ENCODE measurements at regions of chr2 and their contacts with region 1.

Region 1: DNA sequence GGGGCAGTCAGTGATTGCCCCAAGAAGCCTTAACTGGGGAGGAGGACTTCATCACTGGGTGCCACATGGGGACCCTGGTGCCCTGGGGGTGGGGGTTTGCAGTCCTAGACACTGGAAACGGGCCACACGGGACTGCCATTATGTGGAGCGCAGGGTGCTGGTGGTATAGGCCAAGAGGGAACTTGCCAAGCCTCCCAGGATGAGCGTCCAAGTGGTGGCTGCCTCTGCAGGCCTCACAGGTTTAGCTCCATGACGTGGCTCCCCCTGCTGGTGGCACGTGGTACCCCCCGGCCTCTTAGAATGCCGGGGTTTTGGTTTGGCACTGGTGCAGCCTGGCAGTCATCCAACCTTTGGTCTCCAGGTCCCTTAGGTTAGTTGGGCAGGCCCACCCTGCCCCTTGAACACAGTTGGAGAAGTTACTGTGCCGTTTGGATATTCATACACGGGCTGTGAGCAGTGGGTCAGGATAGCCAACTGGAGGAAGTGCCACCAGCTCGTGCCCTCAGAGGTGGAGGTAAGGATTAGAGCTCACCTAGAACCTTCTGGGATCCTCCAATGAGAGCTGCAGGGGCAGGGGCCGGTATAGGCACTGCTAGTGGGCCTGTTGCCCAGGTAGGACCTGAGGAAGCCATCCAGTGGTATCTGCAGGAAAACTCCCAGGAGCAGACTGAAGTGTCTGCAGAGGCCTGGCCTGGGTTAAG is 5.6 kb downstream of the PTMA start:
- DNase-seq: peak; percentile 83
- H3K4me3 ChIP-seq: no peak overlapping the region
- H3K27ac ChIP-seq: peak overlapping the region; percentile 10
- H3K4me1 ChIP-seq: peaks cover 27% of the 10 kb centered on the region
- H3K27me3 ChIP-seq: no peaks in the 10 kb centered on the region
- CTCF ChIP-seq: peak; percentile 91 to 94
- POLR2A ChIP-seq: no peak

Region 2: DNA sequence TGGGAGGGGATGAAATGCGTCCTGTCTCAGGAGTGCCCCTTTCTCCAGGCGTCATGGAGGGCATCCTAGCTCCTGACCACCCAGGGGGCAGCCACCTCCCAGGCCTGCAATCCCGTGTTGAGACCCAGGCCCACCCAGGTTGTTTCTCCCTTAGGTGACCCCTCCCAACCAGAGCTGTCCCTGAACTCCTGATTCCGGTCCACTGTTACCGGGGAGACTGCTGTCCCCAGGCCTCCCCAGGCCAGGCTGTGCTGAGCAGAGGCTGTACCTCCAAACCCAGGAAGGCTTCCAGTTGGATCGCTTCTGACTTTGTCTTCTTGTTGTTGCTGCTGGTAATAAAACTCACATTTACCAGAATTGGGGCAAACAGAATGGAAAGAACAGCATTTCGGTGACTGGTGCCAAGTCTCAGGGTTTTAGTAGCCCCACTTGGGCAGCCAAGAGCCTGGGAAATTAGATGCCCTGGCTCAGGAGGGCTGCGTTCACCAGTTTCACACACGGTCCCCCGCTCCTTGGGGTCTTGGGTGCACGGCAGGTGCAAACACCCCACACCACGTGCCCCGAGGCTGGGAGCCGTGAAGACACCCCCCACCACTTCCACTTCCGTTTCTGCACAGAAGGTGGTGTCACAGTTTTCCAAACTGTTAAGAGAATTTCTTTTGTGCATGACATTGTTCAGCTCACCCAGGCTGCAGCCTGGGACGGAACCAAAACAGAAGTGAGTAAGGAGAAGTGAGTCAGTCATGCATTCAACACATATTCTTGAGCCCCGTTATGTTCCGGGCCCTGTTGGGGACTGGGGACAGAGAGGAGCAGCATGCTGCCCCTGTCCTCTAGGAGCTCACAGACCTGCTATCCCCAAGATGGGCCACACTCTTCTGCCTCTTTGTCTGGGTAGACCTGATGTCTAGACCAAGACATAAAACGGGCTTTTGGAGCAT is 819.8 kb before region 1 on chr2:
- CTCF ChIA-PET with region 1: no interaction called
- POLR2A ChIA-PET with region 1: no interaction called
- dilution Hi-C with region 1: no loop called
- intact Hi-C with region 1: no loop called
- DNase-seq: no peak
- H3K4me3 ChIP-seq: no peak overlapping the region
- H3K27ac ChIP-seq: no peak overlapping the region
- H3K4me1 ChIP-seq: no peaks in the 10 kb centered on the region
- H3K27me3 ChIP-seq: peaks cover 0 to 3% of the 10 kb centered on the region in 2 experiments
- CTCF ChIP-seq: no peak
- POLR2A ChIP-seq: no peak

Region 3: DNA sequence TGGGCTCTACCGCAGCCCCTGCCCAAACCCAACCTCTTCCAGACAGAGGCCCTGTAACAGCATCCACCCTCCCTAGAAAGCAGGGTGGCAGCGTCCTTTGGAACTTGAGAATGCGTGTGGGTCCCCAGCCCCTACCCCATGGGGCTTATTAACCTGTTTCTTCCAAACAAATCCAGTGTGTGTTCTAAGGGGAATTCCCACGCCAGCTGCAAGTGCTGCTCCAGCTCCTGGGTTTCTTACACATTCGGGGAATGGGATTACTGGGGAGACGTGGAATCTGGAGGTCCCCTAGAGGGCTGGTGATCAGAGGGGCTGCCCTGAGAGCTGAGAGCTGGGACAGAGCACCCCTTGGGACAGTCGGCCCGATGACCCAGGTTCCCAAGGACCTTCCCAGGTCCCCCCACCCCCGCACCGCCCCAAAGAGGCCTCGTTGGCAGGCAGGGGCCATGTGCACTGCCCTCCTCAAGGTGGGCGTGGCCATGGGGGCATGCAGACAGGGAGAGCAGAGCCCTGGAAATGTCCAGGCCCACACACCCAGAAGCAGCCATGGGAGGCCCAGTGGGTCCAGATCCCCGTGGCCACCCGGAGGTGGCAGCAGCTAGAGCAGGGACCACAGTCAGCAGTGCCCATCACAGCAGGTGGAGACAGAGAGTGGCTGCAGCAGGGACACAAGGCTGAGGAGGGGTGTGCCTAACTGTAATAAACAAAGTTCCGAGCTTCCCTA is 140.0 kb before region 1 on chr2:
- CTCF ChIA-PET with region 1: no interaction called
- POLR2A ChIA-PET with region 1: no interaction called
- dilution Hi-C with region 1: no loop called
- intact Hi-C with region 1: no loop called
- DNase-seq: no peak
- H3K4me3 ChIP-seq: no peak overlapping the region
- H3K27ac ChIP-seq: no peak overlapping the region
- H3K4me1 ChIP-seq: no peaks in the 10 kb centered on the region
- H3K27me3 ChIP-seq: no peaks in the 10 kb centered on the region
- CTCF ChIP-seq: no peak
- POLR2A ChIP-seq: no peak

Region 4: DNA sequence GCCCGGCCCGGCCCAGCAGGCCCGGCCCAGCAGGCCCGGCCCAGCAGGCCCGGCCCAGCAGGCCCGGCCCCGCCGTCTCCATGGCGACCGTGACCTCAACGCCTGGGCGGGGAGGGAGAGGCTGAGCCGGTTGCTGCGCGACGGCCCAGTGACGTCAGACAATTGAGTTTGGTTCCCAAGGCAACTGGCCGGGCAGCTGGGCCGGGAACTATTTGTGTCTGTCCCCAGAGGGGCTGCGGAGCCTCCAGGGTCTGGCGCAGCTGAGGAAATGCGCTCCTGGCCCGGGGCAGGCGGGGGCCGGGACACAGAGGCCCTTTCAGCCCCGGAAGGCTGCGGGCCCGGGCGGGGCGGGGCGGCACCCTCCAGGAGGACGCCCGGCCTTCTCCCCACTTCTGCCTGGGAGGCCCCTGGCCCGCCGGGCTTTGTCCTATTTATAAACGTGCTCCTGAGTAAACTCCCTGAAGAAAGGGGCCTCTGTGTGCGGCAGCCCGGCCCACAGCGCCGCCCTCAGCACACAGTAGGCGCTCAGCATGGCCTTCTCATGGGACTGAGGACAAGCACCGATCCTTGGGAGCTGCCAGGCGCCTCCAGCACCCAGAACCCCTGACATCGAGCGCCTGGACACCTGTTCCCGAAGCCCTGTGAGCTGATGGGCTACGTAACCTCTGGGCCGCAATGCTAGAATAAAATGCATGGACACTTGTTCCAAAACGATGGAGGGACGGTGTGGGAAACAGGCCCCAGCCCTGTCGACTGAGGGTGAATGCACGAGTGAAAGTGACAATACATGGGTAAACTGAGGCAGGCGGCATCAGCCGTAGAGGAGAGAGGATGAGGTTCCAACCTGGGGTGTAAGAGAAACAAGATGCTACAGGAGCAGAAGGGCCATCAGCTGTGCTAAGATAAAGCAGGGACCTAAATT is 108.9 kb before region 1 on chr2:
- CTCF ChIA-PET with region 1: interaction called, 139 read pairs
- POLR2A ChIA-PET with region 1: no interaction called
- dilution Hi-C with region 1: no loop called
- intact Hi-C with region 1: no loop called
- DNase-seq: peak; percentile 98
- H3K4me3 ChIP-seq: peak overlapping the region in 2 of 3 experiments; percentile 48 to 53
- H3K27ac ChIP-seq: peak overlapping the region; percentile 92
- H3K4me1 ChIP-seq: peaks cover 10% of the 10 kb centered on the region
- H3K27me3 ChIP-seq: no peaks in the 10 kb centered on the region
- CTCF ChIP-seq: no peak
- POLR2A ChIP-seq: no peak

Region 5: DNA sequence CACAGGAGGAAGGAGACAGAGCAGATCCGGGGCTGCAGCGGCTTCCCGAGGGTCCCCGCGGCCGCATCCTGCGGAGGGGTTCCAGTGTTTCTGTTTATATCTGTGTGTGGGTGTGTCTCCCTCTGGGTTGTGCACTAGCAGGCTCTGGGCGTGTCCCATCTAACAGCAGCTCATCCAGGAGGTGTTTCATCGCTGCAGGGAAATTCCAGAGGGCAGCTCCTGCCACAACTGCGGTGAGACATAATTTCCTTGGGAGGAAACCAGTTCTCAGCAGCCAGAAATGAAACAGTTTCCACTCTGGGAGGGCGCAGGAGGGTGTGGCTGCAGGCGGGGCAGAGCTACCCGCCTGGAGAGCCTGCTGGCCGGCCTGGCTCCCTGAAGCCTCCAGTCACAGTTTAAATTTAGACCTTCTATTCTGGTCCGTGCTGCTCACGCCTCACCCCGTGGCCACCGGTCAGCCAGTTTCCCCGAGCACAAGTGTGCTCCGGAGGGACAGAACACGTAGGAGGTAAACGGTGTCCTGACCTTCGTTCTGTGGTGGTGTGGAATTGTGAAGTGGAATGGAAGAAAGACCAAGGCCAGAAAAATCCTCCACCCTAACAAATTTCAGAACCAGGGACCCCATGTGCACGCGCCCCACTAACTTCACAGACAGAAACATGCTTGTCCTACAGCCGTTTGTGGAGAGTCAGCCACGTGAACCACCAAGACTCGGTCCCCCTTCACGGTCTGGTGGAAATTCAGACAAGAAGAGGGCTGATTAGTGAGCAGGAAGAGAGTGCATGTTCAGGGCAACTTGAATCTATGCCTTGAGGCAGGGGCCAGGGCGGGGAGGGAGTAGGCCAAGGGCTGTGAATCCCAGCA is 71.0 kb before region 1 on chr2:
- CTCF ChIA-PET with region 1: interaction called, 30 read pairs
- POLR2A ChIA-PET with region 1: interaction called, 6 read pairs
- dilution Hi-C with region 1: no loop called
- intact Hi-C with region 1: loop called (anchors 1 kb)
- DNase-seq: peak; percentile 94
- H3K4me3 ChIP-seq: peak overlapping the region in 2 of 3 experiments; percentile 6 to 19
- H3K27ac ChIP-seq: peak overlapping the region; percentile 77
- H3K4me1 ChIP-seq: peaks cover 16% of the 10 kb centered on the region
- H3K27me3 ChIP-seq: no peaks in the 10 kb centered on the region
- CTCF ChIP-seq: no peak
- POLR2A ChIP-seq: no peak

Region 6: DNA sequence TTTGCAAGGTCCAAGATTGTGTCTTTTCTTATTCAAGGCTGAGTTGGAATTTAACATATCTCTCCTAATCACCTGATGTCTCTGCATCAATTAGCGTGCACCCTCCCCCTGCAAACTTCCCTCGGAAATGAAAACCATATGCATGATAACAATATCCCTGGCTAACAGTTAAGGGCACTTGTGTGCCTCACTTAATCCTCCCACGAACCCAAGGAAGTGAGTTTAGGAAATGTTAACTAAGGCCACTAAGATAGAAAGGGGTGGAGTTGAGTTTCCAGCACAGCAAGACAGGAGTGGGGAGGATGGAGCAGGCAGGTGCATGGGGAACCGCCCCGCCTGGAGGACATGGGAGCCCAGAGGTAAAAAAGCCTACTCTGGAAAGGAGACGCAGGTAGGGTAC is 58.0 kb before region 1 on chr2:
- CTCF ChIA-PET with region 1: interaction called, 11 read pairs
- POLR2A ChIA-PET with region 1: no interaction called
- dilution Hi-C with region 1: no loop called
- intact Hi-C with region 1: no loop called
- DNase-seq: no peak
- H3K4me3 ChIP-seq: no peak overlapping the region
- H3K27ac ChIP-seq: no peak overlapping the region
- H3K4me1 ChIP-seq: no peaks in the 10 kb centered on the region
- H3K27me3 ChIP-seq: no peaks in the 10 kb centered on the region
- CTCF ChIP-seq: no peak
- POLR2A ChIP-seq: no peak

Region 7: GRCh38 chr2:231726228-231726627 is 12.3 kb after region 1 on chr2:
- CTCF ChIA-PET with region 1: interaction called, 38 read pairs
- POLR2A ChIA-PET with region 1: no interaction called
- dilution Hi-C with region 1: no loop called
- intact Hi-C with region 1: no loop called
- DNase-seq: no peak
- H3K4me3 ChIP-seq: no peak overlapping the region
- H3K27ac ChIP-seq: no peak overlapping the region
- H3K4me1 ChIP-seq: no peaks in the 10 kb centered on the region
- H3K27me3 ChIP-seq: no peaks in the 10 kb centered on the region
- CTCF ChIP-seq: no peak
- POLR2A ChIP-seq: no peak